Left lung (tissue), 14 donors: ENCODE measurements at regions of chr5 and their contacts with region 1.

Region 1: DNA sequence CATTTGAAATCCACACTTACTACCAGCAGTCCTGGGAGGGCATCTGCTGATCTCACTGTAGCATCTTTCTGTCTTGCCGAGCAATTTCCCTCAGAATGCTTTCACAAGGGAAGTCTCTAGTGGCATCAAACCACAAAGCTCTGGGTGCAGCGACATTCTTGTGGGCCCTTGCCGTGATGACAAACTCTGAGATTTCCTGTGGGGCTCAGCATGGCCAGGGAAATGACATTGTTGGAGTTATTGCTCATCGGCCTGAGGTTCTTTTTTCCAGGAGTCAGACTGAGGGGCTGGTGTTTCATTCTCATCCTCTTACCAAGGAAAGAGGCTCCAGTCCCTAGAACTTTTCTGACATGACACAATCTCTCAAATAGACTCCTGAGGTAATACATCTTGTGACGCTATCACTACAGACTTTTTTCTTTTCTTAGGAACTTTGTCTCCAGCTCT is 51.4 kb downstream of the PFDN1 start:
- DNase-seq: peak in 1 of 4 donors; percentile 67
- ATAC-seq: peak; percentile 48
- H3K4me3 ChIP-seq: no peak overlapping the region
- H3K27ac ChIP-seq: peak overlapping the region in 1 of 2 donors; percentile 68
- H3K4me1 ChIP-seq: peaks cover 11 to 63% of the 10 kb centered on the region in 2 donors
- H3K27me3 ChIP-seq: no peaks in the 10 kb centered on the region
- CTCF ChIP-seq: no peak

Region 2: DNA sequence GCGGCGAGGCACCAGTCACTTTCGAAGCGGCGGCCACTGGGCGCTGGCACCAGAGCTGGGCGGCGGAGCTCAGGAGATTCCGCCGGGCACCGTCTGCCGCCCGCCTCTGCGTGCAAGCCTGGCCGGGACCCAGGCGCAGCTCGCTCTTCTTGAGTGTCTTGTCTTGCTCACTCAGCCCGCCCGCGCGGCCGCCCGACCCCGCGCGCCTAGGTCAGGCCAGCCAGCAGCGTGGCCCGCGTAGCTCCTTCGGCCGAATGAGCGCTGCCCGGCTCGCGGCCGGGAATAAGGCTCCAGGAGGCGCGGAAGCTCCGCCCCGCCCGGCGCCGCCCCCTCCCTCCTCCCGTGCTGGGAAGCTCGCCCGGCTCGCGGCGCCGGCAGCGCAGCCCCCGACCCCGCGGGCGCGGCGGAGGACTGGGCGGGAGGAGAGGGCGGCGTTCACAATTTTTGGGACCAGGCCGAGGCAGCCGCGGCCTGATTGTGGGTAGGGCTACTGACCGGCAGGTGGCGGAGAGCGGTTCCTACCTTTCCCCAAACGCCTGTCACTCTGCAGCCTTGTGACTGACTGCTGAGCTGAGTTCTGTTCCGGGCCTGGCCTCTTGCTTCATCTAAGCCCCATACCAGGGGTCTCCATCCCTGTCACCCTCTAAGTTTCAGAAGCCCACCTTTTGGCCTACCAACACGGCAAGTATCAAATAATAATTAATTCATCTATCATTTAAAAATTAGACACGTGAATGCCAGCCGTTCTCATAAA is 95.0 kb after region 1 on chr5 and contains the start of gene HBEGF:
- intact Hi-C with region 1: loop called (anchors 5 to 10 kb)
- DNase-seq: peak; percentile 76 to 98 (median 87)
- ATAC-seq: peak; percentile 86
- H3K4me3 ChIP-seq: peak within 1 kb of the TSS; percentile 75 to 97
- H3K27ac ChIP-seq: peak within 1 kb of the TSS; percentile 70 to 88
- H3K4me1 ChIP-seq: peaks cover 9 to 55% of the 10 kb centered on the region in 2 donors
- H3K27me3 ChIP-seq: no peaks in the 10 kb centered on the region
- CTCF ChIP-seq: peak; percentile 24 to 51
- polyA plus RNA-seq, gene HBEGF: 5.4 to 12.7 (median 7.6) TPM